ENCODE measurements at regions of chr10 and their contacts with region 1.

Region 1: DNA sequence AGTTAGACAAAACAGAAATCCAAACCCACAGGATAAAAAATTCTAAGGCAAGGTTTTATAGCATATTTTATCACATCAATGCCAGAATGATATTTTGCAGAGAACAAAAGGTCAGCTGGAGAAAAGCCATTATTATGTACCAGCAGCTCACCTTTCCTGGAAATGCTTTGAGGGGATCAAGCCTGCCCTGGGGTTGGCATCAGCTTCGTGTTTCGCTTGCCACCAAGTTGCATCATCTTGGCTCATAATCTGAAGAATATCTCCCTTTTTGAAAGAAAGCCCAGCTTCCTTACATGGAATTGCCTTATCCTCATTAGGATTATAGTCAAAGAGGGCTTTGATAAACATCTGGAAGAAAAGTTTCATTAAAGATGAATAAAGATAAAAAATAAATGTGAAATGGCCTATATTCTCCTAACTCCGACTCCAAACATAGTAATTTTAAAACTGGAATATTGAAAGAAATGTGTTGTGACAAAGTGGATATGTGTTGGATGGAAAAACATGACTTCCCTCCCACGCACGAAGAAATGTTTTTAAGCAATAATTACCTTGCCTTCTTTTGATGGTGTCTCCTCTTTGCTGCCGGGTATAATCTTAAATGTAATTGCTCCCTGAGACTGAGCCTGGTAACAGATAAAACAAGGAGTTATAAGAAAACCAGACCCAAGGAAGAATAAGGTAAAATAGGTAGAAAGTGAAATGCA is 121.3 kb upstream of the ODAD2 start:
- DNase-seq: peak; percentile 27
- H3K4me3 Mint-ChIP-seq: no peak overlapping the region
- H3K27ac Mint-ChIP-seq: peak overlapping the region; percentile 81
- H3K4me1 Mint-ChIP-seq: peaks cover 30% of the 10 kb centered on the region
- H3K27me3 Mint-ChIP-seq: no peaks in the 10 kb centered on the region
- CTCF ChIP-seq: no peak

Region 2: DNA sequence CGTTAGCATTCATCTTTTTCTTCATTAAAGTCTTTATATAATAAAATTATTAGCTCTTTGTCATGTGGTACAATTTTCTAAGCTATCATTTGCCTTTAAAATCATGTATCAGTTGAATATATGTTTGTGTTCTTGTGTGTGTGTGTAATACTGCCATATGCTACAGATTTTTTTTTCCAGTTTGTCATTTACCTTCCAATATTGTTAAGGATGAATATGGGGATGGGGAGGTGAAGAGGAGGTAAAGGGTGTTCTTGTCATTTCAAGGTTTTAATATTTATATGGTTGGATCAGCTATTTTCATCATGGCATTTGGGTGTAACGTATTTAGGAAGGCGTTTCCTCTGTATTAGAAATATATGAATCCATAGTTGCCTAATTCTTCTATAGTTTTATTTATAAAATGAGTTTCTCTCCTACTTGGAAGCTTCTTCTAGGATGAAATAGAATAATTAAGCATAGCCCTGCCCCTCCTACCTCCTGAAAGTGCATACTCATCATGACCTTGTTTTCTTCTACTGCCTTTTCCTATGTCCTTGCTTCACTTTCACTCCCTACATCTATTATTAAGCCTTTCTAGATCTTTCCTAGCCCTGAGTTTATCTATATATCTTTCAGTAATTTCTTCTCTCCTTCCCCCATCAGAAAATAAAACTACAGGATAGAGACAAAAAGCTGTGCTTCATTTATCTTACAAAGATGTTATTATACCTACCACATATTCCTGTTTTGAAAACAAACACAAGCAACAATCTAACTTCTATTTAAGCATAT is 591.0 kb before region 1 on chr10:
- CTCF ChIA-PET with region 1: no interaction called
- intact Hi-C with region 1: no loop called
- DNase-seq: no peak
- H3K4me3 Mint-ChIP-seq: no peak overlapping the region
- H3K27ac Mint-ChIP-seq: no peak overlapping the region
- H3K4me1 Mint-ChIP-seq: peaks cover 26% of the 10 kb centered on the region
- H3K27me3 Mint-ChIP-seq: no peaks in the 10 kb centered on the region
- CTCF ChIP-seq: no peak

Region 3: DNA sequence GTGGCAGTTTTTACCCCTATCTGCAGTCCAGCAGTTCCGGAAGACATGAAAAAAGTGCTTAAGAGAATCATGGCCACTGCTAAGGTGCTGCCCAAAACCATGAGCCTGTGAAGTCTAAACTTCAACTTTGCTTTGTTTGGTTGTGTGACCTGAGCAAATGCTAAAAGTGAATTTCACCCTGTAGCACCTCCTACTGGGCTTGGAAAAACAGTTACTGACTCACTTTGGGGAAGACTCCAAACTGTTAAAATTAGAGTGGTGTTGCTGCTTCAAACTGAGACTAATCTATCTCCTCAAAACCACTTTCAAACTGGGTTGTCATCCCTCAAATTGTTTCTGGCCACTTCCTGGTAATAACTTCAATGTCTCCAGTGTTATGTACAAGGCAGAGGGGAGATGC is 395.9 kb before region 1 on chr10:
- CTCF ChIA-PET with region 1: interaction called, 13 read pairs
- intact Hi-C with region 1: no loop called
- DNase-seq: no peak
- H3K4me3 Mint-ChIP-seq: no peak overlapping the region
- H3K27ac Mint-ChIP-seq: no peak overlapping the region
- H3K4me1 Mint-ChIP-seq: no peaks in the 10 kb centered on the region
- H3K27me3 Mint-ChIP-seq: no peaks in the 10 kb centered on the region
- CTCF ChIP-seq: no peak

Region 4: GRCh38 chr10:28091913-28092312 is 28.3 kb before region 1 on chr10:
- CTCF ChIA-PET with region 1: no interaction called
- intact Hi-C with region 1: loop called (anchors 2 kb)
- DNase-seq: no peak
- H3K4me3 Mint-ChIP-seq: no peak overlapping the region
- H3K27ac Mint-ChIP-seq: no peak overlapping the region
- H3K4me1 Mint-ChIP-seq: no peaks in the 10 kb centered on the region
- H3K27me3 Mint-ChIP-seq: no peaks in the 10 kb centered on the region
- CTCF ChIP-seq: no peak

Region 5: DNA sequence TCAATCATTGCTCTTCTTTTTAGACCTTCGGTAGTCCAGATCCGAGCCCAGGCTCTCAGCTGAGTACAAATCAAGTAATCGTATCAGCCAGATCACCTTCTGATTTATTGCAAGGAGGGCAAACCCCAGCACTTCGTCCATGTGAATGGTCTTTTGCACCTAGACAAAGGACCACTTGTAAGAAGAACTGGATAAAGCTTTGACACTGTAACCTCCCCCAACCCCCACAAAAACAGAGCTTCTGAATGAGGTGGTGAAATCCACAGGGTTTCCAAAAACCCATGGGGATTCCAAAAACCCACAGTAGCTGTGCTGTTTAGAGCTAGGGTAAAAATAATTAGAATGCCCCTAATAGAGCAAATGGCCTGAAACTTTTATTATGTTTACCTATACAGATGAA is 27.5 kb after region 1 on chr10:
- CTCF ChIA-PET with region 1: no interaction called
- intact Hi-C with region 1: no loop called
- DNase-seq: no peak
- H3K4me3 Mint-ChIP-seq: no peak overlapping the region
- H3K27ac Mint-ChIP-seq: no peak overlapping the region
- H3K4me1 Mint-ChIP-seq: no peaks in the 10 kb centered on the region
- H3K27me3 Mint-ChIP-seq: no peaks in the 10 kb centered on the region
- CTCF ChIP-seq: no peak

Region 6: GRCh38 chr10:28202941-28203352 is 82.8 kb after region 1 on chr10:
- CTCF ChIA-PET with region 1: no interaction called
- intact Hi-C with region 1: no loop called
- DNase-seq: no peak
- H3K4me3 Mint-ChIP-seq: no peak overlapping the region
- H3K27ac Mint-ChIP-seq: no peak overlapping the region
- H3K4me1 Mint-ChIP-seq: no peaks in the 10 kb centered on the region
- H3K27me3 Mint-ChIP-seq: no peaks in the 10 kb centered on the region
- CTCF ChIP-seq: no peak

Region 7: GRCh38 chr10:28730031-28730778 is 610.0 kb after region 1 on chr10:
- CTCF ChIA-PET with region 1: no interaction called
- intact Hi-C with region 1: no loop called
- DNase-seq: no peak
- H3K4me3 Mint-ChIP-seq: no peak overlapping the region
- H3K27ac Mint-ChIP-seq: no peak overlapping the region
- H3K4me1 Mint-ChIP-seq: no peaks in the 10 kb centered on the region
- H3K27me3 Mint-ChIP-seq: no peaks in the 10 kb centered on the region
- CTCF ChIP-seq: no peak